ENCODE measurements at regions of chr10 and their contacts with region 1.

Region 1: DNA sequence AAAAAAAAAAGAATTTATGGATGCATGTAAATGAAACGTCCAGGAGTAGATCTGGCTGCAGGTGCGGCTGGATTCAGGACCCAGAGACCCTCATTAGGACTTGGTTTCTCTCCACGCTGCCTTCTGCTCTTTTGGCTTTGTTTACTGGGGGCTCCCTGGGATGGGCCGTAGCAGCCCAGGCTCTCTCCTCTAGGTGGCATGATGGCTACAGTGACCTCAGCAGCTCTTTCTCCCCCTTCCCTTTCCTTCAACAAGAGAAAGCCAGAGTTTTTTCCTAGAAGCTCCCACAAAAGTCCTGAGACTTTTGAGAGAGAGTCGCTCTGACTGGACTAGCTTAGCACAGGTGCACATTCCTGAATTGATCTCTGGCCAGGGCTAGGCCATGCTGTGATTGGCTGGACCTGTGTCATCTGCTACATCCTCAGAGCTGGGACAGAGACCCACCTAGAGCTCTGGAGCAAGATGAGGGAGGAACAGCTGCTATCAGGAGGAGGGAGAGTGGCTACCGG is 67.8 kb upstream of the PDCD4 start:
- DNase-seq: no peak
- H3K4me3 ChIP-seq: no peak overlapping the region
- CTCF ChIP-seq: peak; percentile 74

Region 2: DNA sequence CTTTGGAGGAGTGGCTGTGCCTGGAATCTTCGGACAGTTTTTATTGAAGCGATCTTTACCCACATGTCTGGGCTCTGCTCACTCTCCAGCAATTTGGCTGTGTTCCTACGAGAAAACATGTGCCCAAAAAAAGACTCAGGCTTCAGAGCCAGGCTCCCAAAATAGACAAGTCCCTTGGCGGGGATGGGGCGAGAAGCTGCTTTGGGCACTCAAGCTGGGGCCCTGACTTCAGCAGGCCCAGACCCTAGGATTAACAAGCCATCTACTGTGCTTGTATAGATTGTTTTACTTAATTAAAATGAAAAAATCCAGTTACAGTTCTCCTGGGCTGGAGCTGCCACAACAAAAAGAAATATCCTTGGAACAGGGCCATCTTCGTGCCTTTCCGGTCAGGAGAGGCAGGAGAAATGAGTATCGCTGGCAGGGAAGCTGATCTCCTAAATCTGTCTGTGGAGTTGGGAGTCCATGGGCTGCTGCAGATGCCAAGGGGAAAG is 16.5 kb after region 1 on chr10:
- CTCF ChIA-PET with region 1: interaction called, 10 read pairs
- POLR2A ChIA-PET with region 1: interaction called, 3 read pairs
- DNase-seq: no peak
- H3K4me3 ChIP-seq: no peak overlapping the region
- CTCF ChIP-seq: no peak

Region 3: DNA sequence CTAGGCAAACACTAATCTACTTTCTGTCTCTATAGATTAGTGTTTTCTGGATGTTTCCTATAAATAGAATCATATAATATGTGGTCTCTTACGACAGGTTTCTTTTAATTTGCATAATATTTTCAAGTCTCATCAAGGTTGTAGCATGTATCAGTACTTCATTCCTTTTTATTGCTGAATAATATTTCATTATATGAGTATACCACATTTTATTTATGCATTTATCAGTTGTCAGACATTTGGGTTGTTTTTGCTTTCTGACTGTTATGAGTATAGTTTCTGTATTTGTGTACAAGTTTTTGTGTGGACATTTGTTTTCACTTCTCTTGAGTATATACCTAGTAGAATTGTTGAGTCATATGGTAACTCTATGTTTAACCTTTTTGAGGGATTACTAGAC is 163.8 kb after region 1 on chr10:
- CTCF ChIA-PET with region 1: no interaction called
- POLR2A ChIA-PET with region 1: no interaction called
- DNase-seq: no peak
- H3K4me3 ChIP-seq: no peak overlapping the region
- CTCF ChIP-seq: no peak

Measured in AG04449 (cell line).